HepG2 (cell line): ENCODE measurements at regions of chr18 and their contacts with region 1.

Region 1: GRCh38 chr18:4639628-4640310 is 184.7 kb upstream of the DLGAP1 start:
- DNase-seq: no peak
- ATAC-seq: no peak
- H3K4me3 ChIP-seq: no peak overlapping the region
- H3K27ac ChIP-seq: no peak overlapping the region
- H3K4me1 ChIP-seq: no peaks in the 10 kb centered on the region
- H3K27me3 ChIP-seq: no peaks in the 10 kb centered on the region
- CTCF ChIP-seq: no peak
- EP300 ChIP-seq: no peak
- POLR2A ChIP-seq: no peak
- RAD21 ChIP-seq: no peak

Region 2: GRCh38 chr18:4748975-4749374 is 109.2 kb after region 1 on chr18:
- CTCF ChIA-PET with region 1: no interaction called
- POLR2A ChIA-PET with region 1: no interaction called
- in situ Hi-C with region 1: loop called (anchors 25 kb)
- intact Hi-C with region 1: no loop called
- DNase-seq: no peak
- ATAC-seq: no peak
- H3K4me3 ChIP-seq: no peak overlapping the region
- H3K27ac ChIP-seq: no peak overlapping the region
- H3K4me1 ChIP-seq: no peaks in the 10 kb centered on the region
- H3K27me3 ChIP-seq: no peaks in the 10 kb centered on the region
- CTCF ChIP-seq: no peak
- EP300 ChIP-seq: no peak
- POLR2A ChIP-seq: no peak
- RAD21 ChIP-seq: no peak